ENCODE measurements at regions of chr5 and their contacts with region 1.

Region 1: GRCh38 chr5:112707187-112708102 is 30.2 kb upstream of the APC start:
- DNase-seq: peak; percentile 99
- H3K4me3 Mint-ChIP-seq: peak overlapping the region; percentile 96
- H3K27ac Mint-ChIP-seq: peak overlapping the region; percentile 86
- H3K4me1 Mint-ChIP-seq: peaks cover 38% of the 10 kb centered on the region
- H3K27me3 Mint-ChIP-seq: peaks cover 8% of the 10 kb centered on the region

Region 2: DNA sequence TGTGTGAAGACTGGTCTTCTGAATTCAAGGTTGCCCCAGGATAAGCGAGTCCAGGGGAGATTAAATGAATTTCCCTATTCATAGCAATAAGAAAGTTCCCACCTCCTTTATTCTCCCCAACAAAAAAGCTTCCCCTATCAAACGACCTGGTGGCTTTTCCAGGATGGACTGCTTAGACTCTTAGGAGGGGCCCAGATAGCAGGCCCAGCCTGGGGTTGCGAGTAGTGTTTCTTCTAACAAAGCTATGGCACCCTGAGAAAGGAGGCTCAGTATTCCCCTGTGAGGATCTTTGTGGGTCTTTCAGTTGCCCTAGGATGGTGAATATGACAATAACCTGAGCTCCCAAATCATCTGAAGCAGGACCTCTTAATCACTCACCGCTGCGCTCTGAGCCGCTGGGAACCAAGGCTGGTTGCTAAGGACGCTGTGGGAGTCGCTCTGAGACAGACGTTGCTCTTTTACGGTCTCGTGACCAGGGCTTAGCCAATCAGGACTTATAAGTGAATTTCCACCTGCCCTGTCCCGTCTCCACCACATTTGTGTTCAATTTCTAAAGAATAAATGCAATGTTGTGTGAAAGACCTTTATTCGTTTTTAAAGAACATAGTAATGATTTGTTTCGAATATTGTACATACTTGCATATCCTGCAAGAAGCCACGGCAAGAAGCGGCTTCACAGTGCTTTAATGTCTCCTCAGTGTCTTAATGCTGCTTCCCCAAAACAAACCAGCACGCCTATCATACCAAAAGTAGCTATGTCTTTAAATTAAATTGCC is 1981.0 kb before region 1 on chr5 and contains the start of gene TMEM232:
- intact Hi-C with region 1: loop called (anchors 10 kb)
- DNase-seq: peak; percentile 90
- H3K4me3 Mint-ChIP-seq: peak within 1 kb of the TSS; percentile 86
- H3K27ac Mint-ChIP-seq: peak within 1 kb of the TSS; percentile 74
- H3K4me1 Mint-ChIP-seq: peaks cover 6% of the 10 kb centered on the region
- H3K27me3 Mint-ChIP-seq: no peaks in the 10 kb centered on the region
- total RNA-seq, gene TMEM232: 1.6 TPM in 2 replicates

Region 3: DNA sequence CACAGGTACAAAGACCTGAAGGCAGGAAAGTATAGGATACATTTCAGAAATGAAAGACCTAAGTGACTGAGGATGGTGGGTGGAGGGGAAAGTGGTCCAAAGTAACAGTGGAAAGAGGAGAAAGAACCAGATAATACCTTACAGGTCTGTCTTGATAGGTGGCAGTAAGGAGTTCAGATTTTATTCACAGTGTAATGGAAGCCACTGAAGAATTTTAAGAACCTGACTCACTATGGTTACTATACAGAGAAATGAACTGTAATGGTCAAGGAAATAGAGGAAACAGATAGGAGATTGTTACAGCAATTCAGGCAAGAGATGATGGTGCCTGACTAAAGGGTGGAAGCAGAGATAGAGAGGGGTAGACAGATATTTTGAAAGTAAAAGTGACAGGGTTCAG is 334.9 kb before region 1 on chr5:
- intact Hi-C with region 1: no loop called
- DNase-seq: no peak
- H3K4me3 Mint-ChIP-seq: no peak overlapping the region
- H3K27ac Mint-ChIP-seq: no peak overlapping the region
- H3K4me1 Mint-ChIP-seq: no peaks in the 10 kb centered on the region
- H3K27me3 Mint-ChIP-seq: peaks cover 3% of the 10 kb centered on the region

Region 4: GRCh38 chr5:112737463-112738190 is 30.2 kb after region 1 on chr5 and contains the start of gene APC:
- intact Hi-C with region 1: loop called (anchors 1 kb)
- DNase-seq: peak; percentile 93
- H3K4me3 Mint-ChIP-seq: peak within 1 kb of the TSS; percentile 92
- H3K27ac Mint-ChIP-seq: peak within 1 kb of the TSS; percentile 80
- H3K4me1 Mint-ChIP-seq: peaks cover 11% of the 10 kb centered on the region
- H3K27me3 Mint-ChIP-seq: peaks cover 2% of the 10 kb centered on the region
- total RNA-seq, gene APC: 19.1 and 20.4 TPM in 2 replicates

Region 5: DNA sequence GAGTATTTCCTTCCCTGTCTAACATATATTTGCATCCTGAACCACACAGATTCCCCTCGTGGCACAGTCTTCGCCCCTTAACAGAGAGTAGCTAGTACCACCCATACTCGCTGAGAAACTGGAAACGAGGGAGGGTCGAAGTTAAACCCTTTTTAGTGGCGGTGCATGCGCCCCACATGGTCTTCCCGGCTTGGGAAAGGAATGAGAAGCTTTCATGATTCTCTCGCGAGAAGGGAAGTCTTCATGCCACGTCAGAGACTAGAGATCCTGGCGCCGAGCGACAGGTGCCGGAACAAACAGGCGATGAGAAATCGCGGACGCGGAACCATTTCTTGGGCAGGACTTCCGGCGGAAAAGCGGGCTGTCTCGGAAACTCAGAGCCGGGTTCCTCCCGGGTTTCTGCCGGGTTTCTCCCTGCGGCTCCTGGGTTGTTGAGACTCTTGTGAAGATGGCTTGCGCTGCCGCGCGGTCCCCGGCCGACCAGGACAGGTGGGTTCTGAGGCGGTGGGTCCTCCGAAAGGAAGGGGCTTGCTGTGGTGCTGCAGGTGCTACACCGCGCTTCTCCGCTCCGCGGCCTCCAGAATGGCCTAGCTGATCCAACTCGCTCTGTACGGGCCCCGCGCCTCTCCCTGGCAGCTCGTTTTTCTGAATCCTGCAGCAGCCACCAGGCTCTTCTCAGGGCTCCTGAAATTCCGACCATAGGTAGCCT is 153.6 kb after region 1 on chr5 and contains the start of gene SRP19:
- intact Hi-C with region 1: loop called (anchors 5 kb)
- DNase-seq: peak; percentile 98
- H3K4me3 Mint-ChIP-seq: peak within 1 kb of the TSS; percentile 95
- H3K27ac Mint-ChIP-seq: peak within 1 kb of the TSS; percentile 94
- H3K4me1 Mint-ChIP-seq: peaks cover 18% of the 10 kb centered on the region
- H3K27me3 Mint-ChIP-seq: peaks cover 17% of the 10 kb centered on the region
- total RNA-seq, gene SRP19: 67.4 and 74.3 TPM in 2 replicates

Region 6: GRCh38 chr5:112958093-112959088 is 250.9 kb after region 1 on chr5:
- intact Hi-C with region 1: loop called (anchors 5 kb)
- DNase-seq: no peak
- H3K4me3 Mint-ChIP-seq: no peak overlapping the region
- H3K27ac Mint-ChIP-seq: peak overlapping the region; percentile 57
- H3K4me1 Mint-ChIP-seq: peaks cover 26% of the 10 kb centered on the region
- H3K27me3 Mint-ChIP-seq: peaks cover 6% of the 10 kb centered on the region

Region 7: DNA sequence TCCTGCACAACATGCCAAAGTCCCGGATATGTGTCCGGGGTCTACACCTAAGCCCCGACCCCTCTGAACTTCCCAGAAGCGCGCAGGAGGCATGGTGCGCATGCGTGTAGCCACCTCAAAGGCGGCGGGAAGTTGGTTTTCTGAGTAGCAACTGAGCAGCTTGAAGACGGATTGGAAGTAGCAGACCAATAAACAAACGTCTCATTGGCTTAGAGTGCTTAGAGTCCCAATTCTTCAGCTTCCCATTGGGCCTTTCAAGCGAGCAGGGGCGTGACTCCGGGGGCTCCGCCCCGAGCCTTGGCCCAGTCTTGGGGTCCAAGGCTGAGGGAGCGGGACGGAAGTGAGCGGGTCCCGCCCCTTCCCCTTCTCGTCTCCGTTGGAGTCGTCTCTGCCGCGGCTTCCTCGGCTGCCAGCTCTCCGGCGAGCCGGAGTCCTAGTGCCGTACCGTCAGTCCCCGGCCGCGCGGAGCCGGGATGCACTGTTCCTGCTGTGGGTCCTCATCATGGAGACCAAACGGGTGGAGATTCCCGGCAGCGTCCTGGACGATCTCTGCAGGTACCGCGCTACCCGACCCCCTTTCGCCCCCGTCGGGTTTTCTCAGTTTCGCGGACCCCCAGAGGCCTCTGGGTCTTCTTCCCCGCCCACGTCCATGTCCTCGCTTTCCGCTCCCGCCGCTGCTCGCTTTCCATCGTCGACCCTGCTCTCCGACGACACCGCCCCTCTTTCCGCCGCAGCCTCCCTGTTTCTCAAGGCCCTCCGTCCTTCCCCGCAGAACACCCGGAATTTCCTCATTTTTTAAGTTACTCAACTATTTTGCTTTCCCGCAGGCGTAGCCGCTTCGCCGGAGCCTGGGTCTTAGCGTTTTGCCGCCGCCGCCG is 269.2 kb after region 1 on chr5 and contains the start of gene DCP2:
- intact Hi-C with region 1: loop called (anchors 5 kb)
- DNase-seq: peak; percentile 99
- H3K4me3 Mint-ChIP-seq: peak within 1 kb of the TSS; percentile 93
- H3K27ac Mint-ChIP-seq: peak within 1 kb of the TSS; percentile 94
- H3K4me1 Mint-ChIP-seq: peaks cover 35% of the 10 kb centered on the region
- H3K27me3 Mint-ChIP-seq: no peaks in the 10 kb centered on the region
- total RNA-seq, gene DCP2: 73.6 and 78.8 TPM in 2 replicates

Measured in activated CD4-positive, alpha-beta T cell treated with anti-CD3 and anti-CD28 coated beads, Interleukin-2, amount 10 ng/mL, durations not matched to agents 24 days and 14 days (primary cell).